ENCODE measurements at regions of chr10 and their contacts with region 1.

Region 1: DNA sequence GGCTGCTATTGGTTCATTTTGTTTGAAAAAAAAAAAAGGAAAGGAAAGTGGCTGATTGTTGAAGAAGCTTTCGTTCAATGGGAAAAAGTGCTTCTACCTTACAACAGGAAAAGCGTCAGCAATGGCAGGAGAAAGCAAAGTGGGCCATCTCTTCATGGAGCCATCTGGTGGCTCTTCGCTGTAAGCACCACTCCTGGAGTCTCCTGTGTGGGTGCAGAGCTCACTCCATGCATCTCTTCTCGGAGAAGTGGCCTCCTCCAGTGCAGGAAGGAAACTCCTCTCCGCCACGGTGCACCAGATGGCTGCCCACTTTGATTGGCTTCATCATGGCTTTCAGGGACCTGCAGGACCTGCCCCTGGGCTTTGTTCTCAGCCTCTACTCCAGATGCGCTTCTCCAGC is 250.9 kb downstream of the PTEN start:
- DNase-seq: peak; percentile 45
- H3K4me3 Mint-ChIP-seq: no peak overlapping the region
- H3K27ac Mint-ChIP-seq: no peak overlapping the region
- H3K4me1 Mint-ChIP-seq: peaks cover 8% of the 10 kb centered on the region
- H3K27me3 Mint-ChIP-seq: peaks cover 10% of the 10 kb centered on the region

Region 2: DNA sequence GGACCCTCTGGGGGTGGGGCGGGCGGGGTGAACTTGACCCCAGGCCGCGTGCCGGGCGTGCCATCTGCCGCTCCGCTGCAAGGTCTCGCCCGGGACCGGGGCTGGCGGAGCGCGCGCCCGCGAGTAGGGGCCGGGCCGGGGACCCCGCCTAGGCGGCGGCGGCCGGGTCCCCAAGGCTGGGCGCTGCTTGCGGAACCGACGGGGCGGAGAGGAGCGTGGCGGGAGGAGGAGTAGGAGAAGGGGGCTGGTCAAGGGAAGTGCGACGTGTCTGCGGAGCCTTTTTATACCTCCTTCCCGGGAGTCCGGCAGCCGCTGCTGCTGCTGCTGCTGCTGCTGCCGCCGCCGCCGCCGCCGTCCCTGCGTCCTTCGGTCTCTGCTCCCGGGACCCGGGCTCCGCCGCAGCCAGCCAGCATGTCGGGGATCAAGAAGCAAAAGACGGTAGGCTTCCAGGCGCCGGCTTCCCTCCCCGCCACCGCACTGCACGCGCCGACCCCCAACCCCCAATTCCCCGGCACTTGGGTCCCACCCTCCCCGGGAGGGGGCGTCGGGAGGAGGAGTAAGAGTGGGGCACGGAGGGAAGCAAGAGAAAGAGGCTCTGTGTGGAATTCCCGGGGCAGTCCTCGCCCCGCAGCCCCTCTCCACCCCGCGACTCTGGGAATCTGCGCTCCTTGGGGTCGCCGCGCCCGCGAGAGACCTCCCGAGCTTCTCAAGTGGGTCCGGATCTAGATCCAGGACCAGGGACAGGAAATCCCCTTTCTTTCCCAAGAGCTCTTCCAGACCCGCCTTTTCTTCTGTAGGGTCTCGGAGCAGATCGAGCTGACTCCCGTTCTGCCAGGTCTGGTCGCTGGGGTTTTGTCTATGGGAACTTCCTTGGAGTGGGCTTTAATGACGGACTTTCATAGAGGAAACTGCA is 454.5 kb before region 1 on chr10 and contains the start of gene PAPSS2:
- CTCF ChIA-PET with region 1: no interaction called
- intact Hi-C with region 1: loop called (anchors 5 kb)
- DNase-seq: peak; percentile 27
- H3K4me3 Mint-ChIP-seq: peak within 1 kb of the TSS; percentile 74
- H3K27ac Mint-ChIP-seq: no peak within 1 kb of the TSS
- H3K4me1 Mint-ChIP-seq: peaks cover 10% of the 10 kb centered on the region
- H3K27me3 Mint-ChIP-seq: peaks cover 48% of the 10 kb centered on the region
- total RNA-seq, gene PAPSS2: 0.38 TPM in 1 of 2 experiments, not detected in the other

Region 3: DNA sequence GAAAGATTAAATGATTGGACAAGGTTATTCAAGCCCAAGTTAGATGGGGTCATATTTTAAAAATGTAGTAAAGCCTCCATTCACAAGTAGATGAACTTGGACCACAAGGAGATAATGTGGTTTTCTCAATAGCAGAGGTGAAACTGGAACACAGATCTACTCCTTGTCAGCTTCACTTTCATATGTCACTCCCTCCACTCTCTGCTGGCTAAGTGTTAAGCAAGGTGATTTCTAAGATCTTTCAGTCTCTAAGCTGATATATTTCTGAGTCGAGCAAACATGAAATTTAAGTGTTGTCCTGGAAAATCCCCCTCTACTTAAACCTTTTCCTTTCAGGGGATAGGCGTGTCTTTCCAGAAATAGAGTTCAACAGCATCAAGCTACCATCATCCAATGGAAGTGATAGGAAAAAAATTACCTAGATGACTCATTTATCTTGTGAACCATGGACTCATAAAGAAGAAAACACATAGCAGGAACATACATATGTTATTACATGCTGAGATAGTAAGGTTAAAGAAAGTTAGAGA is 24.0 kb after region 1 on chr10:
- CTCF ChIA-PET with region 1: no interaction called
- intact Hi-C with region 1: loop called (anchors 1 kb)
- DNase-seq: no peak
- H3K4me3 Mint-ChIP-seq: no peak overlapping the region
- H3K27ac Mint-ChIP-seq: no peak overlapping the region
- H3K4me1 Mint-ChIP-seq: peaks cover 9% of the 10 kb centered on the region
- H3K27me3 Mint-ChIP-seq: no peaks in the 10 kb centered on the region

Region 4: DNA sequence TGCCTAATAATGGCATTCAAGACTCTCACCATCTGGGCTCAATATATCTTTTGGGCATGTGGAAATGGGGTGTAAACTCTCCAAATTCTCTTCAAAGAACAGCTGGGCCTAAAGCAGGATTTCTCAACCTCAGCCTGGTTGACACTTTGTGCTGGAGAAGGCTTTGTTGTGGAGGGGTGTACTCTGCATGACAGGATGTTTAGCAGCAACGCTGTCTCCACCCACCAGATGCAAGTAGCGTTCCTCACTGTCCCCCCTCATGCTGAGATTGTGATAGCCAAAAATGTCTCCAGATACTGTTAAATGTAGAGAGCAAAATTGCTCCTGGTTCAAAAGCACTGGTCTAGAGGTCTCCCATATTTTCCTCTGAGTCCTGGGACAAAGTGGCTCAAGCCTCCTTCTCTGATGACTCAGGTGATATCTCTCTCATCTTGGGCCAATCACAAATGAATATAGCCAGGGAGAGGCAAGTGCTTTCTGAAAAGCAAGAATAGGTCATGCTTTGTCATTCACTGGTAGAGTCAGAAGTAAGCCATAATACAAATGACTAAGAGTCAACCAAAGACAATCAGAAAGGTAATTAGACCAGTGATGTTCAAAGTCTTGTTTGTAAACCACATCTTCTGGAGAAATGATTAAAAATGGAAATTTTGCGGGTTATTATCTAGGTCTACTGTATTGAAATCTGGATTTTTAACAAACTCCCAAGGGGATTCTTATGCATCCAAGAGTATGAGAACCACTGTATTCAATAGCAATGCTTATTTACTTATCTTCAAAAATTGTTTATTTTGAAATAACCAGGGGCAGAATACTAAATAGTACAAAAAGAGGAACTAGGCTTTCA is 79.9 kb after region 1 on chr10:
- CTCF ChIA-PET with region 1: no interaction called
- intact Hi-C with region 1: loop called (anchors 2 kb)
- DNase-seq: peak; percentile 24
- H3K4me3 Mint-ChIP-seq: no peak overlapping the region
- H3K27ac Mint-ChIP-seq: no peak overlapping the region
- H3K4me1 Mint-ChIP-seq: peaks cover 34% of the 10 kb centered on the region
- H3K27me3 Mint-ChIP-seq: no peaks in the 10 kb centered on the region

Region 5: DNA sequence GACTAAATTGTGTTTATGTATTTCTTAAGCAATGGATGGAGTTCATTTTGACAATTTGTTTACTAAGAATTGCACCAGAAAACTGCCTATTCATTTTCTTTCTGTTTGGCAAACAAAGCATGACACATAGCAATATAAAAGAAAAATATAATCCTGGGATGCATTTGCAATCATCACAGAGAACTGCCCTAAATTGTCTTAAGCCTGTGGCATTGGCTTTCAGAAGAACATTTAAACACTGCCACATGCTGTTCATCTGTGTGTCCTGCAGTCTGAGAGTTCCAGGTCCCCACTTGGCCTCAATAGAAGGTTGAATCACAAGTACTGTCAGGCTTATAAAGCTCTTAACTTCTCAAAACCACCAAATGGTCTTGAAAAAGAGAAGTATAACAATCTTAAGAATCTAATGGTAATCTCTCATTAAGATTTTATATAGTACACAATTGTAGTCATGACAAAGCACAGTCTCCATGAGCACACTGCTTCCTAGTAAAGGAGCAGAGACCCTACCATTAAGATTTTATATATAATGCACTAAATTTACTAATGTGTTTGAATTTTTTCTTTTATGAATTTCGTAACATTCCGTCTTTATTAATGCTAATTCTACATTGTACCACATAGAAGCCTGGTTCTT is 438.9 kb after region 1 on chr10:
- CTCF ChIA-PET with region 1: interaction called, 3 read pairs
- intact Hi-C with region 1: loop called (anchors 5 kb)
- DNase-seq: peak; percentile 54
- H3K4me3 Mint-ChIP-seq: no peak overlapping the region
- H3K27ac Mint-ChIP-seq: no peak overlapping the region
- H3K4me1 Mint-ChIP-seq: no peaks in the 10 kb centered on the region
- H3K27me3 Mint-ChIP-seq: no peaks in the 10 kb centered on the region